Dorsolateral prefrontal cortex (tissue), 120 donors: ENCODE measurements at regions of chr2 and their contacts with region 1.

Region 1: DNA sequence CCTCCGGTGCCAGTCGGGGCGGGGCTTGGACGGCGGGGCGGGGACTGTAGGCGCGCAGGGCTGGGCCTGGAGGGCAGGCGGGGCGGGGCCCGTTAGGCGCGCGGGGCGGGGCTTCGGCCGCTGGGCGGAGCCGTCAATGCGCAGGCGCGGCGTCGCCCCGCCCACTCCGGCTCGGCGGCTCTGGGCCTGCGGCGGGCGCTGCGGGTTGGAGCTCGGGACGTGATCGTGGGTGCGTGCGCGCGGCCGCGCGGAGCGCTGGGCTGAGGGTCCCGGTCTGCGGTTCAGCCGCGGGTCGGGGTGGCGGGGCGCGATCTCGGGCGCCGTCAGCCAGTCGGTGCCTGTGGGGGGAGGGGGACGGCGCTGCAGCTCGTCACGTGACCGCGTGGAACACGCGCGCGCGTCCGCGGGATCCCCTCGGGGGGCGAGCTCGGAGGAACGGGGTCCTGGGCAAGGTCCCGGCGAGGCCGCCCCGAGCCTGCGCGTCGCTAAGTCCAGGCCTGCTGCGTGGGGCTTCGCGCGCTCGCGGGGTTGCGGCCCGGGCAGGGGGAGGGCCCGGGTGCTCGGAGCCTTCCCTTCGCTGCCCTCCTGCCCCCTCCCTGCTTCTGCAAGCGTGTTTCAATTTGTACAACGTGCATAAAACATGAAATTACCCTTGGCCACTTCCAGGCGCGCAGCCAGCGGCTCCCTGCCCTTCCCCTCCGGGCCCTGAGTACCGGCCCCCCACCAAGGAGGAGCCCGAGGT is at the start of gene D2HGDH:
- DNase-seq: peak; percentile 83 to 95 (median 92)
- H3K4me3 ChIP-seq: peak within 1 kb of the TSS; percentile 66 to 99 (median 94)
- H3K27ac ChIP-seq: peak within 1 kb of the TSS; percentile 9 to 96 (median 90)
- H3K27me3 ChIP-seq: no peaks in the 10 kb centered on the region
- CTCF ChIP-seq: peak in 7 of 56 donors; percentile 1 to 43 (median 13)
- total RNA-seq, gene D2HGDH: 17.2 to 49.8 (median 28.8) TPM

Region 2: DNA sequence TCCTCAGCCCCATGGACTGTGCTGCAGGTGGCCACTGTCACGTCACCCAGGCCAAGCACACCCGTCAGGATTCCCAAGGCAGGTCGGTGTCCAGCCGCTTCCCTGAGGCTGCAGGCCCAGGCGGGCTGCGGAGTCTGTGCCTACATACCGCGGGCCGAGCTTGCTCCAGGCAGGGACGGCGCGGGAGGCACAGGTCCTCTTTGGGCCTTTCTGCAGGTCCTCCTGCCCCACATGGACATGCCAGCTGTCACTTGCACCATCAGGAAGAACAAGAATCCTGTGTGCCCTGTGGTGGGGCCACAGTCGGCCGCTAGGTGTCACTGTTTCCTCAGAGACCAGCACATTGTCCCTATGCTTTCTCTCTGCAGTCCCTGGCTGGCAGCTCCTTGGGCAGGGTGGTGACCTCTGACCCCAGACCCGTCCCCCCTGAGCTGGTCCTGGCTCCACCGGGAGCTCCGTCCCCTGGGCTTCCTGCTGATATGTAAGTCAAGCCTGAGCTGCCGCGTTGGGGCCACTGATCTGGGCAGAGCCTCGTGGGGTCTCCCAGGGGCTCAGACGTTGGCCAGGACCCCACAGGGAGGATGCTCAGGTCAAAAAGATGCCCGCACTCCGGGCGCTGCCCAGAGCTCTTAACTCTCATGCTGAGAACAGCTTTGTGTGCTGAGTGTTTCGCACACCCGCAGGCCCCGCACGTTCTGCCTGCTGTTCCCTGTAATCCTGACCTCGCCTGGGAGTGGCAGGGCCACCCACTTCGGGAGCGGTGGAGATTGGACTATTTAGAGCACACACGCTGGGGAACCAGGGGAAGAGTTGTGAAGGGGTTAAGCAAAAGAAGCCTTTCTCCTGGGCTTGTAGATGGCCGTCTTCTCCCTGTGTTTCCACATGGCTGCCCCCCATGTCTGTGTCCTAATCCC is 883.3 kb before region 1 on chr2:
- intact Hi-C with region 1: loop called in 1 of 2 experiments (anchors 10 kb)
- DNase-seq: peak; percentile 85 to 95 (median 91)
- H3K4me3 ChIP-seq: no peak overlapping the region
- H3K27ac ChIP-seq: peak overlapping the region in 1 of 59 donors; percentile 66
- H3K27me3 ChIP-seq: no peaks in the 10 kb centered on the region
- CTCF ChIP-seq: peak; percentile 83 to 99 (median 95)

Region 3: DNA sequence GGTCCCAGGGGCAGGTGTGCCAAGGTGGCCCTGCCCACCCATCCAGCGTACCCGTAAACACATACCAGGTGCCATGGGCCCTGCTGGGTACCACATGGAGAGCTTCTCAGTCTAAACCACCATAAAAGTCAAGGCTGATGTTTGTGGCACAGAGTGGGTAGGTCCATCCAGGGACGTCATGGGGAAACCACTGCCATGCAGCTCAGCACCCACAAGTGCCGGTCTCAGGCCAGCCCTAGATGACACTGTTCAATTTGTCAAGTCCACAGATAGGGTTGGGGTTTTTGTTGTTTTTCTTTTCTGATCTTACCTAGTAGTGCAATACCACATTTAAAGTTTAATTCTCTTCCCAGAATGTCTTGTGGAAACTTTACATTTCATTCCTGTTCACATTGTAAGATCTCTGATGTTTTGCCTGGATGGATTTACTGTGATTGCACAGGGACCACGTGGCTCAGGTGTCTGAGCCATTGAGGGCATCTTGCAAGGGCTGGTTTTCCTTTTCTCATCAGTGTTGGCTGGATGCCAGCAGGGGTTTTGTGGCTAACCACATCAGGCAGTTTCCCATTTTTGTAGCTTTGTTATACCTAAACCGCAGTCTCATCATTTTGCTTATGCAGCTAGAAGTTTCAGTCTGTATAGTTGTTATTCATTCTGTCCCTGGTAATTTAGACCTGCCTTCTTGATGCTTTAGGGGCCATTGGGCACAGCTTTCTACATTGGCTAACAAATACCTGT is 291.0 kb before region 1 on chr2:
- intact Hi-C with region 1: no loop called
- DNase-seq: no peak
- H3K4me3 ChIP-seq: no peak overlapping the region
- H3K27ac ChIP-seq: no peak overlapping the region
- H3K27me3 ChIP-seq: no peaks in the 10 kb centered on the region
- CTCF ChIP-seq: no peak

Region 4: GRCh38 chr2:241637000-241637791 is 97.4 kb before region 1 on chr2 and contains the starts of genes ATG4B and THAP4:
- intact Hi-C with region 1: loop called in 1 of 2 experiments (anchors 5 kb)
- DNase-seq: peak; percentile 69 to 92 (median 81)
- H3K4me3 ChIP-seq: peak within 1 kb of the TSS; percentile 57 to 99 (median 86)
- H3K27ac ChIP-seq: peak within 1 kb of the TSS; percentile 91 to 100 (median 98)
- H3K27me3 ChIP-seq: no peaks in the 10 kb centered on the region
- CTCF ChIP-seq: peak in 24 of 56 donors; percentile 7 to 48 (median 22)
- total RNA-seq, gene ATG4B: 79.3 to 164 (median 118) TPM
- total RNA-seq, gene THAP4: 35.1 to 69.3 (median 54.0) TPM

Region 5: GRCh38 chr2:241686649-241687425 is 47.8 kb before region 1 on chr2 and contains the start of gene DTYMK:
- intact Hi-C with region 1: loop called (anchors 5 kb)
- DNase-seq: peak; percentile 93 to 98 (median 96)
- H3K4me3 ChIP-seq: peak within 1 kb of the TSS; percentile 54 to 98 (median 93)
- H3K27ac ChIP-seq: peak within 1 kb of the TSS; percentile 62 to 98 (median 93)
- H3K27me3 ChIP-seq: no peaks in the 10 kb centered on the region
- CTCF ChIP-seq: peak in 36 of 56 donors; percentile 3 to 58 (median 29)
- total RNA-seq, gene DTYMK: 9.9 to 26.6 (median 15.6) TPM

Region 6: GRCh38 chr2:241702132-241703031 is 32.3 kb before region 1 on chr2:
- intact Hi-C with region 1: loop called (anchors 2 kb)
- DNase-seq: peak; percentile 77 to 93 (median 84)
- H3K4me3 ChIP-seq: peak overlapping the region; percentile 63 to 100 (median 88)
- H3K27ac ChIP-seq: peak overlapping the region in 56 of 59 donors; percentile 32 to 97 (median 91)
- H3K27me3 ChIP-seq: no peaks in the 10 kb centered on the region
- CTCF ChIP-seq: peak in 24 of 56 donors; percentile 3 to 46 (median 23)

Region 7: DNA sequence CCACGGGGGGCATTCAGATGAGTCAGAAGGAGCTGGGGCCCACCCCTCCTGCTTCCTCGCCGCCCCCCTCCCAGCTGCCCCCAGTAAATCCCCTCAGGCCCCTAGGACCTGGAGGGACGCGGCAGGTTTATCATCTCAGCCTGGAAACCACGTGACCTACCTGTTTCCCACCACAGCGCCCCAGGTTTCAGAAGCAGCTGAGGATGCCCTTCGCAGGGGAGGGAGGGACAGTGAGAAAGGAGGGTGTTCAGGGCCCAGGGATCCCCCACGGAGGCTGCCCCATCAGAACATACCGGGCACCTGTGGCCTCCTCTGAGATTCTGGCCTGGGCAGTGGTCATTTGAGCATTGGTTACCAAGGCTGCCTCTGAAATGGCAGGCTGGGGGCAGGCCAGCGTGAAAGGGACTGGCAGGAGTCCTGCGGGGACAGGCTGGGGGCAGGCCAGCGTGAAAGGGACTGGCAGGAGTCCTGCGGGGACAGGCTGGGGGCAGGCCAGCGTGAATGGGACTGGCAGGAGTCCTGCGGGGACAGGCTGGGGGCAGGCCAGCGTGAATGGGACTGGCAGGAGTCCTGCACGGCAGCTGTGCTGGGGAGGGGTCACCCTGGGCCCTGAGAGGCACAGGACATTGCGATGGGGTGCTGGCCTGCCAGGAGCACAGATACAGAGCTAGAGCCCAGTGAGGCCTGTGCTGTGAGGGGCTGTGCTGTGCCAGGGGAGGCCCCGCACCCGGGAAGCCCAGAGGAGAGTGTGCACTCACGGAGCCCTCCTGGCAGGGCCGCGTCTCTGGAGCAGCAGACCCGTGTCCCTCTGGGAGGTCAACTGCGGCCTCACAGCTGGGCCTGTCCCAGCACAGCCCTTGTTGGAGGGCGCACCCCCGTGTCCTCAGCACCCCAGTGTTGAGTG is 75.9 kb after region 1 on chr2:
- intact Hi-C with region 1: loop called in 1 of 2 experiments (anchors 2 kb)
- DNase-seq: peak in 9 of 10 donors; percentile 52 to 88 (median 78)
- H3K4me3 ChIP-seq: peak overlapping the region in 46 of 59 donors; percentile 1 to 57 (median 24)
- H3K27ac ChIP-seq: peak overlapping the region in 40 of 59 donors; percentile 3 to 81 (median 63)
- H3K27me3 ChIP-seq: no peaks in the 10 kb centered on the region
- CTCF ChIP-seq: peak in 6 of 56 donors; percentile 6 to 17 (median 12)

Region 8: DNA sequence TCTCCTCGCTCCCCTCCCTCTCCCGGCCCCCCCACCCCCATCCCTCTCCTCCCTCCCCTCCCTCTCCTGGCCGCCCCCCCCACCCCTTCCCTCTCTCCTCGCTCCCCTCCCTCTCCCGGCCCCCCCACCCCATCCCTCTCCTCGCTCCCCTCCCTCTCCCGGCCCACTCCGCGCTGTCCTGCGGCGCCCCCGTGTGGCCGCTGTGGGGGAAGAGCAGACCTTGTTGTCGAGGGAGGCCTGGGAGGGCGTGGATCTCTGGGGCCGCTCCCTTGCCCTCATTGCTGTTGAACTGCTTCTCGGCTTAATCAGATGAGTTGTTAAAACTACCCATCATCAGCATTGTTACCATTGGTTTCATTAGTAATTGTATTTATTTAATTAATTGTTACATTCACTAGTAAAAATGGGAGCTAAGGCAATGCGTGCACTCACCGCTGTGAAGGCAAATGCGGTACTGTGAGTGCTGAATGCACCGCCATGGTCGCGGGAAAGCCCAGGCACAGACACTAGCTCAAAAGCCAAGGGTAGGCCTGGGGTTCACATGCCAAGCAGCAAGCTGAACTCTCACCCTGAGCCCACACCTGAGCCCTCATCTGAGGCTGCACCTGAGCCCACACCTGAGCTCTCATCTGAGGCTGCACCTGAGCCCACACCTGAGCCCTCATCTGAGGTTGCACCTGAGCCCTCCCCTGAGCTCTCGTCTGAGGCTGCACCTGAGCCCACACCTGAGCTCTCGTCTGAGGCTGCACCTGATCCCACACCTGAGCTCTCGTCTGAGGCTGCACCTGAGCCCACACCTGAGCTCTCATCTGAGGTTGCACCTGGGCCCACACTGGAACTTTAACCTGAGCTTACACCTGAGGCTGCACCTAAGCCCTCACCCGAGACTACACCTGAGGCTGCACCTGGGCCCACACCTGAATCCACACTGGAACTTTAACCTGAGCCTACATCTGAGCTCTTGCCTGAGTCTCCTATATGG is 143.6 kb after region 1 on chr2:
- intact Hi-C with region 1: loop called (anchors 2 to 5 kb)
- DNase-seq: peak in 8 of 10 donors; percentile 53 to 84 (median 64)
- H3K4me3 ChIP-seq: peak overlapping the region in 4 of 59 donors; percentile 10 to 18 (median 16)
- H3K27ac ChIP-seq: no peak overlapping the region
- H3K27me3 ChIP-seq: no peaks in the 10 kb centered on the region
- CTCF ChIP-seq: peak; percentile 24 to 77 (median 66)